ENCODE measurements at regions of chr1 and their contacts with region 1.

Region 1: DNA sequence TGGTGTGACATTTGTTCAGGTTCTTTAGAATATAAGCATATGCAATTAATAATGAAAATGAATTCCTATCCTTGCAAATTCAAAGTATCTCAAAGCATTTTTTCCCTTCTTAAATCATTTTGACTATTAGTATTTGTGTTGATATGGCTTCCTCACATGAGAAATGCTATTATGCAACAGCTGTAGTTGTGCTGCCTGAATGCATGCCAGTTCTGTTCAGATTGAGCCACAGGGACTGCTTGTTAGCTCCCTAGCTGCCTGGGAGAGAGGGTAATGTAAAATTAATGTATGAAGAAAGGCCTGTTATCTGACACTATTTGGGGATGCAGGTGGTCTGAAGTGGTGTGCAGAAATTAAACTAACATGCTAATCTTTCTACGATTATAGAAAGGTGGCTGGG is 45.5 kb downstream of the CACHD1 start:
- DNase-seq: peak; percentile 46 to 73
- ATAC-seq: peak; percentile 89 to 91
- H3K4me3 ChIP-seq: no peak overlapping the region
- H3K27ac ChIP-seq: peak overlapping the region in 3 of 4 donors; percentile 52 to 64 (median 54)
- H3K4me1 ChIP-seq: peaks cover 33 to 38% of the 10 kb centered on the region in 2 donors
- H3K27me3 ChIP-seq: no peaks in the 10 kb centered on the region
- CTCF ChIP-seq: no peak
- POLR2A ChIP-seq: no peak

Region 2: GRCh38 chr1:64268653-64269557 is 246.5 kb before region 1 on chr1:
- in situ Hi-C with region 1: no loop called
- intact Hi-C with region 1: no loop called
- DNase-seq: peak; percentile 45 to 47
- ATAC-seq: peak; percentile 77 to 83
- H3K4me3 ChIP-seq: no peak overlapping the region
- H3K27ac ChIP-seq: no peak overlapping the region
- H3K4me1 ChIP-seq: no peaks in the 10 kb centered on the region
- H3K27me3 ChIP-seq: no peaks in the 10 kb centered on the region
- CTCF ChIP-seq: peak; percentile 52 to 79 (median 63)
- POLR2A ChIP-seq: no peak

Region 3: GRCh38 chr1:64476251-64476952 is 39.0 kb before region 1 on chr1:
- in situ Hi-C with region 1: no loop called
- intact Hi-C with region 1: loop called (anchors 5 kb)
- DNase-seq: no peak
- ATAC-seq: peak; percentile 13 to 83
- H3K4me3 ChIP-seq: no peak overlapping the region
- H3K27ac ChIP-seq: peak overlapping the region; percentile 4 to 18 (median 10)
- H3K4me1 ChIP-seq: peaks cover 24 to 31% of the 10 kb centered on the region in 2 donors
- H3K27me3 ChIP-seq: no peaks in the 10 kb centered on the region
- CTCF ChIP-seq: no peak
- POLR2A ChIP-seq: no peak

Region 4: GRCh38 chr1:64535938-64536835 is 20.8 kb after region 1 on chr1:
- in situ Hi-C with region 1: no loop called
- intact Hi-C with region 1: loop called (anchors 2 kb)
- DNase-seq: no peak
- ATAC-seq: no peak
- H3K4me3 ChIP-seq: no peak overlapping the region
- H3K27ac ChIP-seq: no peak overlapping the region
- H3K4me1 ChIP-seq: peaks cover 9 to 24% of the 10 kb centered on the region in 2 donors
- H3K27me3 ChIP-seq: no peaks in the 10 kb centered on the region
- CTCF ChIP-seq: no peak
- POLR2A ChIP-seq: no peak